A549 (cell line): ENCODE measurements at regions of chr10 and their contacts with region 1.

Region 1: GRCh38 chr10:102678842-102679289 is 34.6 kb downstream of the TRIM8 start:
- DNase-seq: peak; percentile 50 to 74
- ATAC-seq: peak; percentile 91 to 99
- H3K4me3 ChIP-seq: no peak overlapping the region
- H3K27ac ChIP-seq: no peak overlapping the region
- H3K4me1 ChIP-seq: 0 out of 3 replicates have a peak, but pooled peaks cover 4% of the 10 kb centered on the region
- CTCF ChIP-seq: peak; percentile 80
- EP300 ChIP-seq: no peak
- POLR2A ChIP-seq: no peak
- RAD21 ChIP-seq: peak; percentile 65 to 68

Region 2: DNA sequence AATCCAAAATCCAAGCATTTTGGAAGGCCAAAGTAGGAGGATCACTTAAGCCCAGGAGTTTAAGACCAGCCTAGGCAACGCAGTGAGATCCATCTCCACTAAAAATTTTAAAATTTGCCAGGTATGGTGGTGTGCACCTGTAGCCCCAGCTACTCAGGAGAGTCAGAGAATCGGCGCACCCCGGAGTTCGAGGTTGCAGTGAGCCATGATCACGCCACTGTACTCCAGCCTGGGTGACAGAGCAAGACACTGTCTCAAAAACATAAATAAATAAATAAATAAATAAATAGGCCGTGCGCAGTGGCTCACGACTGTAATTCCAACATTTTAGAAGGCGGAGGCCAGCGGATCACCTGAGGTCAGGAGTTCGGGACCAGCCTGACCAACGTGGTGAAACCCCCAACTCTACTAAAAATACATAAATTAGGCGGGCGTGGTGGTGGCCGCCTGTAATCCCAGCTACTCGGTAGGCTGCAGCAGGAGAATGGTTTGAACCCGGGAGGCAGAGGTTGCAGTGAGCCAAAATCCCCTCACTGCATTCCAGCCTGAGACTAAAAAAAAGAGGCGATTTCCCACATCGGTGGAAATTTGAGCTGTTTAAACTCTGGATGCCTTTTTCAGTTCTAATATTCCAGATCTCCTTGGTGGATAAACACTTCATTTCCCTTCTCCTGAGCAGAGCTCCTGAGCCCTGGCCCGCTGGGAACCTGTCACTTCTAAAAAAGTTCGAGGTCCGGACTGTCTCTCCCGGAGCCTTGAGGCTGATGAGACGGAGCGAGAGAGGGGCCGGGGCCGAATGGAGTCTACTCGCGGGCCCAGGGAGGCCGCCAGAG is 285.4 kb before region 1 on chr10:
- CTCF ChIA-PET with region 1: no interaction called
- POLR2A ChIA-PET with region 1: no interaction called
- DNase-seq: no peak
- ATAC-seq: peak in 1 of 2 experiments; percentile 81; a peak in 3 of 6 replicates
- H3K4me3 ChIP-seq: peak overlapping the region; percentile 56
- H3K27ac ChIP-seq: peak overlapping the region; percentile 68 to 91; a peak in 5 of 6 replicates
- H3K4me1 ChIP-seq: peaks cover 16% of the 10 kb centered on the region; the same call in 2 of the 3 replicates
- CTCF ChIP-seq: no peak
- EP300 ChIP-seq: no peak
- POLR2A ChIP-seq: no peak
- RAD21 ChIP-seq: peak in 1 of 2 experiments; percentile 72; a peak in 1 of 5 replicates

Region 3: GRCh38 chr10:102691285-102692066 is 12.6 kb after region 1 on chr10:
- CTCF ChIA-PET with region 1: interaction called, 30 read pairs
- POLR2A ChIA-PET with region 1: interaction called, 5 read pairs
- DNase-seq: no peak
- ATAC-seq: no peak
- H3K4me3 ChIP-seq: no peak overlapping the region
- H3K27ac ChIP-seq: no peak overlapping the region
- H3K4me1 ChIP-seq: no peaks in the 10 kb centered on the region
- CTCF ChIP-seq: no peak
- EP300 ChIP-seq: no peak
- POLR2A ChIP-seq: no peak
- RAD21 ChIP-seq: no peak

Region 4: GRCh38 chr10:102781921-102782557 is 103.2 kb after region 1 on chr10:
- CTCF ChIA-PET with region 1: no interaction called
- POLR2A ChIA-PET with region 1: no interaction called
- DNase-seq: no peak
- ATAC-seq: no peak
- H3K4me3 ChIP-seq: no peak overlapping the region
- H3K27ac ChIP-seq: no peak overlapping the region
- H3K4me1 ChIP-seq: peaks cover 7% of the 10 kb centered on the region; the same call in 1 of the 3 replicates
- CTCF ChIP-seq: no peak
- EP300 ChIP-seq: no peak
- POLR2A ChIP-seq: no peak
- RAD21 ChIP-seq: no peak